CD4-positive, alpha-beta memory T cell (primary cell): ENCODE measurements at regions of chr16 and their contacts with region 1.

Region 1: GRCh38 chr16:66511615-66512500 is 38.1 kb downstream of the TK2 start:
- DNase-seq: no peak
- H3K4me3 ChIP-seq: no peak overlapping the region
- H3K4me3 Mint-ChIP-seq: peak overlapping the region in 1 of 8 donors; percentile 50
- H3K27ac ChIP-seq: no peak overlapping the region
- H3K27ac Mint-ChIP-seq: peak overlapping the region in 5 of 7 donors; percentile 13 to 79 (median 30)
- H3K4me1 ChIP-seq: peaks cover 39% of the 10 kb centered on the region
- H3K4me1 Mint-ChIP-seq: peaks cover 23 to 51% (median 32%) of the 10 kb centered on the region in 4 donors
- H3K27me3 ChIP-seq: no peaks in the 10 kb centered on the region
- H3K27me3 Mint-ChIP-seq: no peaks in the 10 kb centered on the region

Region 2: GRCh38 chr16:66426112-66427035 is 85.5 kb before region 1 on chr16:
- CTCF ChIA-PET with region 1: no interaction called
- POLR2A ChIA-PET with region 1: no interaction called
- intact Hi-C with region 1: no loop called
- DNase-seq: no peak
- H3K4me3 ChIP-seq: no peak overlapping the region
- H3K4me3 Mint-ChIP-seq: peak overlapping the region in 7 of 8 donors; percentile 33 to 78 (median 58)
- H3K27ac ChIP-seq: no peak overlapping the region
- H3K27ac Mint-ChIP-seq: no peak overlapping the region
- H3K4me1 ChIP-seq: peaks cover 11% of the 10 kb centered on the region
- H3K4me1 Mint-ChIP-seq: peaks cover 2 to 10% (median 5%) of the 10 kb centered on the region in 4 donors
- H3K27me3 ChIP-seq: peaks cover 22% of the 10 kb centered on the region
- H3K27me3 Mint-ChIP-seq: peaks cover 33 to 42% of the 10 kb centered on the region in 2 donors

Region 3: GRCh38 chr16:66483689-66484481 is 28.0 kb before region 1 on chr16:
- CTCF ChIA-PET with region 1: interaction called, 27 read pairs
- POLR2A ChIA-PET with region 1: no interaction called
- intact Hi-C with region 1: no loop called
- DNase-seq: peak; percentile 60 to 69 (median 64)
- H3K4me3 ChIP-seq: no peak overlapping the region
- H3K4me3 Mint-ChIP-seq: no peak overlapping the region
- H3K27ac ChIP-seq: no peak overlapping the region
- H3K27ac Mint-ChIP-seq: peak overlapping the region in 5 of 7 donors; percentile 27 to 68 (median 61)
- H3K4me1 ChIP-seq: peaks cover 16% of the 10 kb centered on the region
- H3K4me1 Mint-ChIP-seq: peaks cover 10 to 24% (median 13%) of the 10 kb centered on the region in 4 donors
- H3K27me3 ChIP-seq: no peaks in the 10 kb centered on the region
- H3K27me3 Mint-ChIP-seq: no peaks in the 10 kb centered on the region

Region 4: DNA sequence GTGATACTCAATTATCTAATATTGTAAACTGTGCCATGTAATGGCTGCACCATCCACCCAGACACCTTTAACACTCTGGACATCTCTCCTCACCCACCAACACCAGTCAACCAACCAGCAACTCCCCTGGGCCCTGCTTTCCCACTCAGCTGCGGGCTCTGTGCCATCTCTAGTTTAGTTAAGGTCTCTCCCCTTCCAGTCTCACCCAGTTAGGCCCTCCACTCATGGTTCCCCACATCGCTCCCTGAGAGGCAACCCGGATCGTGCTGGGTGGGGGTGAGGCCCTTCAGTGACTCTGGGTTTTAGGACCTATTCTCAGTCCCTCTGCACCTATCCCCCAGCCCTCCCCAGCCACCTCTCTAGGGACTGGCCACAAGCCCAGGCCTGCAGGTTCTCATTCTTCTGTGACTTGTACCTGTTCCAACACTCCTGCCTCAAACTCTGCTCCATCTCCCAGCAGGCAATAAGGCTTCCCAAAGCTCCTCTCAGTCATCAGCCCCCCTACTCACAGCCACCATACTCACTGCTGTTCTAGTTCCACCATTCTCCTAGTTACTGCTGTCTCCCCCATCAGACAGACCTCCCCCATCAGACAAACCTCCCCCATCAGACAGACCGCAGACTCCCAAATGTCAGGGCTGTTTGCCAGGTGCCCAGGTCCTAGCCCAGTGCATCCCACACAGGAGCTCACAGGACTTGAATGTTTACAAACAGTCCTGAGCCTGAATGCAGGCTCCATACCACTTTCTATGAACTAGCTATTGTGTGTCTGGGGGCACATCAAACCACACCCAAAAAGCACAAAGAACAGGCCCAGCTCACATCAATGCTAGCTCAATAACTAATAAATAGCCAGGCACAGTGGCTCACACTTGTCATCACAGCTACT is 35.5 kb after region 1 on chr16:
- CTCF ChIA-PET with region 1: interaction called, 36 read pairs
- POLR2A ChIA-PET with region 1: interaction called, 28 read pairs
- intact Hi-C with region 1: no loop called
- DNase-seq: no peak
- H3K4me3 ChIP-seq: no peak overlapping the region
- H3K4me3 Mint-ChIP-seq: peak overlapping the region in 1 of 8 donors; percentile 40
- H3K27ac ChIP-seq: no peak overlapping the region
- H3K27ac Mint-ChIP-seq: peak overlapping the region; percentile 19 to 97 (median 78)
- H3K4me1 ChIP-seq: peaks cover 47% of the 10 kb centered on the region
- H3K4me1 Mint-ChIP-seq: peaks cover 31 to 46% (median 39%) of the 10 kb centered on the region in 4 donors
- H3K27me3 ChIP-seq: no peaks in the 10 kb centered on the region
- H3K27me3 Mint-ChIP-seq: no peaks in the 10 kb centered on the region

Region 5: DNA sequence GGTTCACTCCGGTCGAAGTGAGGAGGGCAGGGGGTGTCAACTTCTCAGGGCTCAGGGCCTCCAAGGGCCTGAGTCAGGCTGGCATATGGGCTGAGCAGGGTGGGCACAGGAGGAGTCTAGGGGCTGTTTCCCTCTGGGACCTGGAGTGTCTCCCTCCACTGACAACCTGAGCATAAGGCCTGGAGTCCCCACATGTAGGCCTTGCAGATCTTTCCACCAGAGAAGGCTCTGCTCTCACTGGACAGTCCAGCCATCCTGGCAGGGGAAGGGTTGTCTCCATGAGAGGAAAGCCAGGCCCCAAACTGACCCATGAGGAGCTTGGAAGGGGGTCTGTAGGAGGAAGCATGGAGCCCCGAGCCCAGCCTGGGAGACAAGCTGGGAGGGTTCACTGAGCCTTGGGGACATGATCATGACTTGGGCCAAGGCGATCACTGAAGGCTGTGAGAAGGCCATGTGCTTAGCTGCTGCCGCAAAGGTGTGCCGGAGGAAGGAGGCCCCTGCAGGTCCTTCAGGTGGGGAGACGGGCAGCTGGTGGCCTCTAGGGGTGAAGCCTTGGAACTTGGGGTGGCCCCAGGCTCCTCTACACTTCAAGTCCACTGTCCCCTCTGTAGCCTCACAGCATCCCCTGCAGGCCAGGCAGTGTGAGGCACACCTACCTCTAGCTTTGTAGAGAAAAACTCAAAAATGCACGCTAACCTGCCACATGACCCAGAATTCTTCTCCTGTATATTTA is 77.3 kb after region 1 on chr16:
- CTCF ChIA-PET with region 1: interaction called, 34 read pairs
- POLR2A ChIA-PET with region 1: interaction called, 12 read pairs
- intact Hi-C with region 1: loop called (anchors 1 kb)
- DNase-seq: peak; percentile 64 to 74 (median 70)
- H3K4me3 ChIP-seq: no peak overlapping the region
- H3K4me3 Mint-ChIP-seq: peak overlapping the region; percentile 80 to 94 (median 87)
- H3K27ac ChIP-seq: no peak overlapping the region
- H3K27ac Mint-ChIP-seq: peak overlapping the region; percentile 48 to 96 (median 77)
- H3K4me1 ChIP-seq: peaks cover 20% of the 10 kb centered on the region
- H3K4me1 Mint-ChIP-seq: peaks cover 13 to 23% (median 19%) of the 10 kb centered on the region in 4 donors
- H3K27me3 ChIP-seq: no peaks in the 10 kb centered on the region
- H3K27me3 Mint-ChIP-seq: no peaks in the 10 kb centered on the region

Region 6: DNA sequence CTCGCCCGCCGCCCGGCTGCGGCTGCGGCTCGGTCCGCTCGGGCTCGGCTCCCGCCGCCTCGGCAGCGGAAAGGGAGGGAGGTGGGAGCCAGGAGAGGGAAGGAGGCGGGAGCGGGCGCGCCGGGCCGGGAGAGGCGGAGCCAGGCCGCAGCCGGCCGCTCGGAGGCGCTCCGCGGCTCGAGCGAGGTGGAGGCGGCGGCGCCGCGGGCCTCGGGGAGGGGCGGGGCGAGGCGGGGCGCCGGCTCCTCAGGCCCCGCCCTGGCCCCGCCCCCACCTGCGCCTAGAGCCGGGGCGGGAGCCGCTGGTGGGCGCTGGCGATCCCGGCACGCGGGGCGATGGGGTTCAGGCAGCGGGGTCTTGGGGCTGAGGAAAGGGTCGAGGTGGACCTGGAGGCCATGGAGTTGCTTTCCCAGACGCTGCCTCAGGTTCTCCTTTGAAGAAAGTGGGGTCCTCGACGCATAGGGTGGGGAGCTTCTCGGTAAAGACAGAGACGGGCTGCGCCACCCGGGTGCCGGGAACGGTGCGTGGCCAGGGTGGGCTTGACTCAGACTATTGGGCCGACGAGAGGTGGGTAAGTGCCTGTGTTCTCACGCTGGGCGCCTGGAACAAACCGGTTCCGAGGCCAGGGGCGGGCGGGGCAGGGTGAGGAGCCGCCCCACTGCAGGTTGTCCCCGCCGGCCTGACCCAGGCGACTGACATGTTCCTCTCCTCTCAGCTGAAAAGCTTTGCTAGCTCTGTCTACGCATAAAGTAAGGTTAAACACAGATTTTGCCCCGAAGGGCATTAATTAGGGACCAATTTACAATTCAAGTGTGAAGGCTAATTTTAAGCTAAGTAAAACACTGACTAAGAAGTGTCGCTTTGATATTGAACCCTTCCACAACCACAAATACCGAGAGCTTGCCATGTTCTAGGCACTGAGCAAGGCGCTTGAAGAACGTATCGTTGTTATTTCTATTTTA is 185.1 kb after region 1 on chr16 and contains the start of gene CMTM4:
- CTCF ChIA-PET with region 1: no interaction called
- POLR2A ChIA-PET with region 1: no interaction called
- intact Hi-C with region 1: no loop called
- DNase-seq: peak; percentile 68 to 80 (median 72)
- H3K4me3 ChIP-seq: peak within 1 kb of the TSS in 1 of 2 donors; percentile 57
- H3K4me3 Mint-ChIP-seq: peak within 1 kb of the TSS; percentile 78 to 87 (median 85)
- H3K27ac ChIP-seq: peak within 1 kb of the TSS; percentile 27
- H3K27ac Mint-ChIP-seq: peak within 1 kb of the TSS in 5 of 7 donors; percentile 23 to 78 (median 66)
- H3K4me1 ChIP-seq: peaks cover 8% of the 10 kb centered on the region
- H3K4me1 Mint-ChIP-seq: peaks cover 5 to 20% (median 12%) of the 10 kb centered on the region in 4 donors
- H3K27me3 ChIP-seq: no peaks in the 10 kb centered on the region
- H3K27me3 Mint-ChIP-seq: peaks cover 0 to 5% of the 10 kb centered on the region in 2 donors
- total RNA-seq, gene CMTM4: 2.0 to 2.2 TPM